ENCODE measurements at regions of chr12 and their contacts with region 1.

Region 1: GRCh38 chr12:6937481-6938297 is 5.9 kb upstream of the RNU7-1 start:
- DNase-seq: peak; percentile 96
- H3K4me3 Mint-ChIP-seq: peak overlapping the region; percentile 88
- H3K27ac Mint-ChIP-seq: peak overlapping the region; percentile 95
- H3K4me1 Mint-ChIP-seq: peaks cover 54% of the 10 kb centered on the region
- H3K27me3 Mint-ChIP-seq: no peaks in the 10 kb centered on the region

Region 2: GRCh38 chr12:6890789-6891645 is 46.7 kb before region 1 on chr12:
- CTCF ChIA-PET with region 1: interaction called, 11 read pairs
- POLR2A ChIA-PET with region 1: interaction called, 30 read pairs
- DNase-seq: peak; percentile 99
- H3K4me3 Mint-ChIP-seq: peak overlapping the region; percentile 79
- H3K27ac Mint-ChIP-seq: peak overlapping the region; percentile 93
- H3K4me1 Mint-ChIP-seq: peaks cover 38% of the 10 kb centered on the region
- H3K27me3 Mint-ChIP-seq: no peaks in the 10 kb centered on the region

Region 3: GRCh38 chr12:6927379-6928024 is 10.2 kb before region 1 on chr12 and contains the start of gene ATN1:
- CTCF ChIA-PET with region 1: interaction called, 27 read pairs
- POLR2A ChIA-PET with region 1: interaction called, 295 read pairs
- DNase-seq: peak; percentile 48
- H3K4me3 Mint-ChIP-seq: peak within 1 kb of the TSS; percentile 90
- H3K27ac Mint-ChIP-seq: peak within 1 kb of the TSS; percentile 78
- H3K4me1 Mint-ChIP-seq: peaks cover 68% of the 10 kb centered on the region
- H3K27me3 Mint-ChIP-seq: no peaks in the 10 kb centered on the region
- total RNA-seq, gene ATN1: 33.9 to 34.6 TPM

Region 4: GRCh38 chr12:6959058-6959804 is 21.5 kb after region 1 on chr12:
- CTCF ChIA-PET with region 1: interaction called, 465 read pairs
- POLR2A ChIA-PET with region 1: interaction called, 1,188 read pairs
- DNase-seq: peak; percentile 78
- H3K4me3 Mint-ChIP-seq: peak overlapping the region; percentile 88
- H3K27ac Mint-ChIP-seq: peak overlapping the region; percentile 99
- H3K4me1 Mint-ChIP-seq: peaks cover 92% of the 10 kb centered on the region
- H3K27me3 Mint-ChIP-seq: no peaks in the 10 kb centered on the region

Region 5: GRCh38 chr12:7108796-7109571 is 171.3 kb after region 1 on chr12 and contains the start of gene C1RL:
- CTCF ChIA-PET with region 1: interaction called, 10 read pairs
- POLR2A ChIA-PET with region 1: interaction called, 168 read pairs
- DNase-seq: peak; percentile 83
- H3K4me3 Mint-ChIP-seq: peak within 1 kb of the TSS; percentile 91
- H3K27ac Mint-ChIP-seq: peak within 1 kb of the TSS; percentile 94
- H3K4me1 Mint-ChIP-seq: peaks cover 61% of the 10 kb centered on the region
- H3K27me3 Mint-ChIP-seq: no peaks in the 10 kb centered on the region
- total RNA-seq, gene C1RL: 26.5 to 28.8 TPM

Region 6: DNA sequence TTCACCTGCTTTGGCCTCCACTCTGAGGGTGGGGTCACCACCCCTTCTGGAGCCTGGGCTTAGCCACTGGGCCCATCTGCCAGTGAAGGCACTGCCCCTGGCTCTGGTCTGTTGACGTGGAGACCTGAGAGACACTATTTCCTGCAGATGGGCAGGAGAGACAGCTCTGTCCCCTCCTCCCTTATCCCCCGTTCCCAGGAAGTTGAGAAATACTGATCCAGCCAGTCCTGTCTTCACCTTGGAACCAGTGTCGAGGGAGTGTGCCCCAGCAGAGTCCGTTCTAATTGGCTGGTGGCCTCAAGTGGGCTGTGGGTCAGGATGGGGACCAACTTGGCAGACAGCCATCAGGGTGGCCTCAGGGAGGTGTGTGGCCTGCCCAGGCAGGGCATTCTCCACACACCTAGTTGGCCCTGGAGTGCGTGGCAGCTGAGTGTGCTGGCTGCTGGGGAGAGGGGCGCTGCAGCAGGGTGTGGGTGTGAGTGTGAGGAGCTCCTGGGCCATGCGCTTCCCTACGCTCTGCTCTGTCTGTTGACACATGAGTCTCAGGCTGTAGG is 217.9 kb after region 1 on chr12:
- CTCF ChIA-PET with region 1: no interaction called
- POLR2A ChIA-PET with region 1: no interaction called
- DNase-seq: no peak
- H3K4me3 Mint-ChIP-seq: no peak overlapping the region
- H3K27ac Mint-ChIP-seq: no peak overlapping the region
- H3K4me1 Mint-ChIP-seq: no peaks in the 10 kb centered on the region
- H3K27me3 Mint-ChIP-seq: no peaks in the 10 kb centered on the region